Activated naive CD4-positive, alpha-beta T cell treated with anti-CD3 and anti-CD28 coated beads for 36 hours (primary cell): ENCODE measurements at regions of chr4 and their contacts with region 1.

Region 1: GRCh38 chr4:75940692-75941253 is at the start of gene NAAA:
- DNase-seq: peak; percentile 85
- H3K4me3 Mint-ChIP-seq: peak within 1 kb of the TSS; percentile 96
- H3K27ac Mint-ChIP-seq: peak within 1 kb of the TSS; percentile 91
- H3K4me1 Mint-ChIP-seq: peaks cover 23% of the 10 kb centered on the region
- H3K27me3 Mint-ChIP-seq: no peaks in the 10 kb centered on the region
- total RNA-seq, gene NAAA: 24.4 to 27.1 TPM

Region 2: DNA sequence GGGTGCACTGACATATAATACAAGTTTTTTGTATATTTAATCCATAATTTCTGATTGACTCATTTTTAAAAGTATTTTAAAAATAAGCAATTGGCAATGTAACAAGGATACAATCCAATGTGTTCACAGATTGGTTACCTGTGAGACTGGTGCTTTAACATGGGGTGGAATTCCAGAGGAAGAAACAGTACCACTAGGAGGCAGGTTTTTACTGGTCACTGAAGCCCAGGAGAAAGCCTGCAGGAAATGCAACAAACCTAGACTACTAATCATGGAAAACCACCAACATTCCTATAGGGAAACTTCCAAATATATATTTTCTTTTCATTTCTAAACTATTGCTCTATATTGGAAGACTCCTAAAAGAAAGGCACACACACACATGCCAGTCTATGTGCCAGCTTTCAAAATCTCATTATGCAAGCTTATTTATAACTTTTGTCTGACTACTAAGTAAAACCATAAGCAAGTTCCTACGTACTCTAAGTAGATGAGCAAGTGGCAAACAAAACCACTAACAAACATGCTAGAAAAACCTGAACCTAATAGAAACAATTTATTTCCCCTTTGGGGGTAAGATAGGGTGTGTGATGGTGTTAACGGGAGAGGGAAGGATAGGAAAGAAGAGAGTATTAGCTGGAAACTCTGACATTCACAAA is 286.8 kb before region 1 on chr4:
- CTCF ChIA-PET with region 1: no interaction called
- intact Hi-C with region 1: loop called (anchors 10 kb)
- DNase-seq: no peak
- H3K4me3 Mint-ChIP-seq: no peak overlapping the region
- H3K27ac Mint-ChIP-seq: peak overlapping the region; percentile 78
- H3K4me1 Mint-ChIP-seq: peaks cover 43% of the 10 kb centered on the region
- H3K27me3 Mint-ChIP-seq: no peaks in the 10 kb centered on the region

Region 3: GRCh38 chr4:75916091-75916661 is 24.6 kb before region 1 on chr4:
- CTCF ChIA-PET with region 1: interaction called, 12 read pairs
- intact Hi-C with region 1: loop called (anchors 1 kb)
- DNase-seq: peak; percentile 43
- H3K4me3 Mint-ChIP-seq: no peak overlapping the region
- H3K27ac Mint-ChIP-seq: no peak overlapping the region
- H3K4me1 Mint-ChIP-seq: no peaks in the 10 kb centered on the region
- H3K27me3 Mint-ChIP-seq: no peaks in the 10 kb centered on the region

Region 4: DNA sequence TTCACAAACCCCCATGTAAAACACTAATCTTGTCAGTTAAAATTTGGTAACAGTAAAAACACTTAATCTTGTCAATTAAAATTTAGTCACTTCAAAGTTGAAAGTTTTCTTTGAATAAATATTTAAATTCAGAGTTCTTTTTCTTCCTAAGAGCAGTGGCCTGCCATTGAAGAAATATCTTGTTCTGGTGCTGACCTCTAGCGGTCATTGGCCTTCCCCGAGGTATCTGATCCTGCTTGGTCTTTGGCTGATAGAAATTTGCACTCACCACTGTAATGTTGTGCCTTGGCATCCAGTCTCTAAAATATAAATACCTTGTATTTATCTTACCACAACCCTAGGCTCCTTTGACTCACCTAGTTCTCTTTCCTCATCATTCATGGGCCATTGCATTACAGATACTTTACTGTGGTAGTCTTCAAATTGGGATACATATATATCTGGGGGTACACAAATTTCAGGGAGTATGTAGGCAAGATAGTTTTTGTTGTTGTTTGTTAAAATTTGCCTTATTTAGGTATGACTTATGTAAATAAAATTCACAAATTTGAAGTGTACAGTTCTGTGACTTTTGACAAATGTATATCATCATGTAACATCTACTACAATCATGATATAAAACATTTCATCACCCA is 127.0 kb after region 1 on chr4:
- CTCF ChIA-PET with region 1: no interaction called
- intact Hi-C with region 1: loop called (anchors 1 kb)
- DNase-seq: peak; percentile 90
- H3K4me3 Mint-ChIP-seq: no peak overlapping the region
- H3K27ac Mint-ChIP-seq: no peak overlapping the region
- H3K4me1 Mint-ChIP-seq: no peaks in the 10 kb centered on the region
- H3K27me3 Mint-ChIP-seq: peaks cover 4% of the 10 kb centered on the region

Region 5: GRCh38 chr4:77681792-77682191 is 1741.0 kb after region 1 on chr4:
- CTCF ChIA-PET with region 1: no interaction called
- intact Hi-C with region 1: no loop called
- DNase-seq: no peak
- H3K4me3 Mint-ChIP-seq: no peak overlapping the region
- H3K27ac Mint-ChIP-seq: no peak overlapping the region
- H3K4me1 Mint-ChIP-seq: no peaks in the 10 kb centered on the region
- H3K27me3 Mint-ChIP-seq: peaks cover 2% of the 10 kb centered on the region